Activated T-helper 2 cell treated with anti-CD3 and anti-CD28 coated beads, Interferon-gamma antibody, Interleukin-2, Interleukin-4, amounts not matched to agents 10 μg/mL and 5 μg/mL and 100 μg/mL, durations not matched to agents 14 hours and 24 hours and 36 hours (primary cell): ENCODE measurements at regions of chr15 and their contacts with region 1.

Region 1: DNA sequence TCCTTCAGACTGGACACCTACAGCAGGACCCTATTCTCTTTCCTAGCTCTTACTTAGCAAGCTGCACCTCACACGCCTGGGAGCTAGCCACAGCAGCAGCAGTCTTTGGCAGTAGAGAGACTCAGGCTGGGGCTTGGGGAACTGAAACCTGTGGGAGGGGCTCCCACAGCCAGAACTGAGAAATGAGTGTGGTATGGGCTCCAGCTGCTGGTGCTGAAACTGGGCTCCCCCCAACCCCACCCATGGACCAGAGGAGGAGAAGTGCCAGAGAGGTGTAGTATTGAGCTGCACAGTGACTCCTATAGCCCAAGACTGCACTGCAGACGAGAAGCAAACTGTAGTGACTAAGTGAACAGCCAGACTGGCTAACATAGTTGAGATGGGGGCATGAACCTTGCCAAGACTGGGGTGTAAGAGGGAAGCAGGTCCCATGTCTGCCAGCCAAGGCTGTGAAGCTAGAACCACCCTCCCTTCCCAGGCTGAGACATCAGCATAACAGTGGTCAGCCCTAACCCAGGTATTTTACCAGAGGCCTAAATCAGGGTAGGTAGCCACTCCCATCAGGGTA is 62.5 kb downstream of the MYO5A start:
- DNase-seq: peak; percentile 48
- H3K4me3 Mint-ChIP-seq: no peak overlapping the region
- H3K27ac Mint-ChIP-seq: peak overlapping the region; percentile 55
- H3K4me1 Mint-ChIP-seq: peaks cover 43% of the 10 kb centered on the region
- H3K27me3 Mint-ChIP-seq: no peaks in the 10 kb centered on the region

Region 2: DNA sequence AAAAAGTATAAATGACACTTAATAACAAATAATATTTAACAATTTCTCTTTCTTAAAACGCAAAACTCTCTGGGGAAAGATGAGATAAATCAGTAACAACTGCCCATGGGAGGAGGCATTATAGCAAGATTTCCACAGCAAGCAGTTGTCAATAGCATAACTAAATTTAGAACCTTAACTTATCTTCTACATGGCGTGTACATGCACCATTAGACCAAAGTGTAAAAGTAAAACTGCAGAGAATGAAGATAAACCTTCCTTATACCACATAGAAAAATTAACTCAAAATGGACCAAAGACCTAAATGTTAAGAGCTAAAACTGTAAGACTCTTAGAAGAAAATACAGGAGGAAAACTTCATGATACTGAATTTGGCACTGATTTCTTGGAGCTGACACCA is 22.6 kb after region 1 on chr15:
- intact Hi-C with region 1: loop called (anchors 1 kb)
- DNase-seq: no peak
- H3K4me3 Mint-ChIP-seq: peak overlapping the region; percentile 26
- H3K27ac Mint-ChIP-seq: peak overlapping the region; percentile 86
- H3K4me1 Mint-ChIP-seq: peaks cover 52% of the 10 kb centered on the region
- H3K27me3 Mint-ChIP-seq: no peaks in the 10 kb centered on the region

Region 3: DNA sequence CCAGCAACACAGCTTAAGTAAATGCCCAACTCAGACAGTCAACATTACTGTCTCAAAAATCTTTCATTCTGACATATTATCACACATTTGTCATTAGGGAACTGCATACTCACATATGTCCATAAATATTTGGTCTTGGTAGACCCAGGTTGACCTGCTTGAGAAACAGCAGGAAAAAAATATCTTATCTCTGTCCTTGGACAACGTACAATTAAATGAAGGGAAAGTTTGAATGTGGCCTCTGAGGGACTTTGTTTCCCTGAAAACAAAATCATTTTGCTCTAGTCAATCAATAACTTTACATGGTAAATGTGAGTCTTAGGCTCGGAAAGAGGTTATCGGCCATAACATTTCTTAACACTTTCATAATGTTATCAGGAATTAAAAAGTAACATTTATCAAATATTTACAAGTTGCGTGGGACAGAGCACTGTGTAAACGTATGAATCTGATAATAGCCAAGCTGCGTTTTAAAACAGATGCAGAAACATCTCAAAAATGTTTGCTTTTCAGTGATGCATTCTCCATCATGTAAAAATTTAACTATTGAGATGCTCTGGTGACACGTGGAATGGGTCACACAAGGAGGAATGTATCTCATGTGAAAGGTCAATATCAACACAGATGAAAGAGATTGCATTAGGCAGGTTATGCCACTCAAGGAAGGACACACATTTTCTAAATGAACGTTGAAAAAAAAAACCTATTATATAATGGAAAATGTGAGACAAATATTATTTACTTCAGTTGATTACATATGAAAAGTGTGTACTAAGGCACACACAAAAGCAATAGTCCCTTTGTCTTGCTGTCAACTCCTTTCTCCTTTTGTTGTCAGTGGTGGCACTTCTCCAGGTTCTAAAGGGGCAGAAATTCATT is 988.9 kb after region 1 on chr15:
- intact Hi-C with region 1: no loop called
- DNase-seq: no peak
- H3K4me3 Mint-ChIP-seq: no peak overlapping the region
- H3K27ac Mint-ChIP-seq: no peak overlapping the region
- H3K4me1 Mint-ChIP-seq: no peaks in the 10 kb centered on the region
- H3K27me3 Mint-ChIP-seq: no peaks in the 10 kb centered on the region